Activated CD4-positive, alpha-beta memory T cell treated with anti-CD3 and anti-CD28 coated beads for 36 hours (primary cell): ENCODE measurements at regions of chr7 and their contacts with region 1.

Region 1: GRCh38 chr7:12674849-12675248 is 12.6 kb upstream of the ARL4A start:
- DNase-seq: peak; percentile 44
- H3K4me3 Mint-ChIP-seq: no peak overlapping the region
- H3K27ac Mint-ChIP-seq: no peak overlapping the region
- H3K4me1 Mint-ChIP-seq: peaks cover 12% of the 10 kb centered on the region
- H3K27me3 Mint-ChIP-seq: no peaks in the 10 kb centered on the region

Region 2: GRCh38 chr7:12146813-12147212 is 528.0 kb before region 1 on chr7:
- CTCF ChIA-PET with region 1: no interaction called
- POLR2A ChIA-PET with region 1: no interaction called
- intact Hi-C with region 1: no loop called
- DNase-seq: no peak
- H3K4me3 Mint-ChIP-seq: no peak overlapping the region
- H3K27ac Mint-ChIP-seq: no peak overlapping the region
- H3K4me1 Mint-ChIP-seq: no peaks in the 10 kb centered on the region
- H3K27me3 Mint-ChIP-seq: no peaks in the 10 kb centered on the region

Region 3: GRCh38 chr7:12490117-12490688 is 184.6 kb before region 1 on chr7:
- CTCF ChIA-PET with region 1: no interaction called
- POLR2A ChIA-PET with region 1: no interaction called
- intact Hi-C with region 1: no loop called
- DNase-seq: no peak
- H3K4me3 Mint-ChIP-seq: no peak overlapping the region
- H3K27ac Mint-ChIP-seq: no peak overlapping the region
- H3K4me1 Mint-ChIP-seq: no peaks in the 10 kb centered on the region
- H3K27me3 Mint-ChIP-seq: no peaks in the 10 kb centered on the region

Region 4: DNA sequence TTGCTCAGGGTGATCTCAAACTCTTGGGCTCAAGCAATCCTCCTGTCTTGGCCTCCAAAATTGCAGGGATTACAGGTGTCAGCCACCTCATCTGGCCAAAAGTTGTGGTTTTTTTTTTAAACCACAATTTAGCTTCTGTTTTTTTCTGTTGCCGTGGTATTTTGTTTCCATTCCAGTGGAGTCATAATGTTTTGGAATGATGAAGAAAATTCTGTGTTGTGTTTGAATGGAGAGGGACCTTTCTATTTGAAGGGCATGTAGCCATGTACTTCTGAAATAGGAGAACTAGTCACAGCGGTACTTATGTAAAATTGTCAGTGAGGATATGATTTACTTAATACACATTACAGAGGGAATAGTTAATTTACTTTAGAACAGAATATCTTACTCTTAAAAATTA is 213.9 kb after region 1 on chr7:
- CTCF ChIA-PET with region 1: no interaction called
- POLR2A ChIA-PET with region 1: no interaction called
- intact Hi-C with region 1: loop called (anchors 10 kb)
- DNase-seq: no peak
- H3K4me3 Mint-ChIP-seq: no peak overlapping the region
- H3K27ac Mint-ChIP-seq: no peak overlapping the region
- H3K4me1 Mint-ChIP-seq: no peaks in the 10 kb centered on the region
- H3K27me3 Mint-ChIP-seq: peaks cover 6% of the 10 kb centered on the region

Region 5: GRCh38 chr7:12951397-12951801 is 276.6 kb after region 1 on chr7:
- CTCF ChIA-PET with region 1: no interaction called
- POLR2A ChIA-PET with region 1: no interaction called
- intact Hi-C with region 1: loop called (anchors 10 kb)
- DNase-seq: no peak
- H3K4me3 Mint-ChIP-seq: no peak overlapping the region
- H3K27ac Mint-ChIP-seq: no peak overlapping the region
- H3K4me1 Mint-ChIP-seq: no peaks in the 10 kb centered on the region
- H3K27me3 Mint-ChIP-seq: no peaks in the 10 kb centered on the region

Region 6: GRCh38 chr7:13057462-13058200 is 382.8 kb after region 1 on chr7:
- CTCF ChIA-PET with region 1: no interaction called
- POLR2A ChIA-PET with region 1: no interaction called
- intact Hi-C with region 1: loop called (anchors 10 kb)
- DNase-seq: no peak
- H3K4me3 Mint-ChIP-seq: peak overlapping the region; percentile 1
- H3K27ac Mint-ChIP-seq: no peak overlapping the region
- H3K4me1 Mint-ChIP-seq: peaks cover 16% of the 10 kb centered on the region
- H3K27me3 Mint-ChIP-seq: peaks cover 2% of the 10 kb centered on the region

Region 7: DNA sequence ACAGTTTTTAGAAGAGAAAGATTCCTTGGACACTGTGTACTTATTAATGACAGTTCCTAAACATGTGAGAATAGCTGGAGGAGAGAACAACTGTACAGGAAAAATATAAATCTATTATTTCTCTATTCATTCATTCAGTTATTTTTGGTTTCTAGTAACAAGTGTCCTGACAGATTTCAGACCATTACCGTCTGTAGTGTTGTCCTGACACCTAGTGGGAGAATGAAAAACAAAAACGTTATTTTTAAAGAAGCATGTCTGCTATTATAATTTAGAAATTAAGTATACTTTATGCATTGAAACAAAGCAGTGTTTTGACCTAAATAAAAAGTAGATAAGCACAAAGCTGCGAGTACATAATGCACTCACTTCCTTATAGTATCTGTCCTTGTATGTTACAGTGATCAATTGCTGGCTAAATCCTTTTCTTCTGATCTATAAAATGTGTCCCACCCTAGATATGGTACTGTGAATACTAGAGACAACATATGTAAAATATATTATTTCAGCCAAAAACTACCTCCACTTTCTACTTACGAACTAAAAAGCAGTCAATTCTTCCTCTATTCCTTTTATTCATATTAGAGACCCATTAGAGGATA is 588.2 kb after region 1 on chr7:
- CTCF ChIA-PET with region 1: interaction called, 14 read pairs
- POLR2A ChIA-PET with region 1: no interaction called
- intact Hi-C with region 1: loop called (anchors 1 kb)
- DNase-seq: no peak
- H3K4me3 Mint-ChIP-seq: no peak overlapping the region
- H3K27ac Mint-ChIP-seq: no peak overlapping the region
- H3K4me1 Mint-ChIP-seq: no peaks in the 10 kb centered on the region
- H3K27me3 Mint-ChIP-seq: peaks cover 2% of the 10 kb centered on the region